HCT116 (cell line): ENCODE measurements at regions of chr1 and their contacts with region 1.

Region 1: DNA sequence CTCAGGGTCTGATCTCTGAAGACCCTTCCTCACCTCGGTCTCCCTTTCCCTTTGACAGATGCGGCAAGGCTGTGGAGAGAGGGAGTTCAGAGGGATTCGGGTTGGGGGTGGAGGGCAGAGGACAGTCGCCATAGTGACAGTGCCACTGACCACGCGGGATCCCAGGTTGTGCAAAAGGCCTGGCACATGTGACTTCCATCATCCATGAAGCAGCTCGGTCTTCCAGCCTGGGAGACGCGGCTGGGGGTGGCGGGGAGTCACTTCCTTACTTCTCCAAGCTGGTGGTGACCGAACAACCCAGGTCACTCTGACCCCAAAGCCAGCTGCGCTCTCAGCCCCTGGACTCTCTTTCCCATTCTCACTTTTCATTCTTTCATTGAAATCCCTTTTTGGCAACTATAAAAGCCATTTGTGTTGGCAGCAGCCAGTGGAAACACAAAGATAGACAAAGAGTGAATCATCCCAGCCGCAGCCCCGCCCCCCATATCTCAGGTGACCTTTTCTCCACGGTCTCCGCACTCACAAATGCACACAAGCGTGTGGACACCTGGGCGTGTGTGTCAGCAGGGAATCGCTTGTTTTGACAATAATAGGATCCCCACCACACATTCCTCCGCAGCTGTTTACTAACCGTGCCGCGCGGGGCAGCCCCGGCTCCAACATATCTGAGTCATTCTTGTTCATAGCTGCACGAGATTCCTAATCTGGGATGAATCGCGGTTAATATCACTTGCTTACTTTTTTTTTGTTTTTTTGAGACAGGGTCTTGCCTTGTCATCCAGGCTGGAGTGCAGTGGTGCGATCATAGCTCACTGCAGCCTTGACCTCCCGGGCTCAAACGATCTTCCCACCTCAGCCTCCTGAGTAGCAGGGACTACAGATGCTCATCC is 68.3 kb downstream of the DHRS3 start:
- DNase-seq: peak; percentile 83
- ATAC-seq: peak; percentile 79
- H3K4me3 ChIP-seq: peak overlapping the region; percentile 22 to 35
- H3K27ac ChIP-seq: peak overlapping the region; percentile 61
- H3K4me1 ChIP-seq: peaks cover 23 to 69% of the 10 kb centered on the region in 2 experiments
- H3K27me3 ChIP-seq: no peaks in the 10 kb centered on the region
- CTCF ChIP-seq: no peak
- POLR2A ChIP-seq: no peak
- RAD21 ChIP-seq: no peak

Region 2: GRCh38 chr1:12407050-12407961 is 142.4 kb before region 1 on chr1:
- CTCF ChIA-PET with region 1: no interaction called
- POLR2A ChIA-PET with region 1: no interaction called
- RAD21 ChIA-PET with region 1: no interaction called
- intact Hi-C with region 1: loop called (anchors 10 kb)
- DNase-seq: peak; percentile 12
- ATAC-seq: peak; percentile 65
- H3K4me3 ChIP-seq: no peak overlapping the region
- H3K27ac ChIP-seq: no peak overlapping the region
- H3K4me1 ChIP-seq: peaks cover 0 to 15% of the 10 kb centered on the region in 2 experiments; a peak in 1 of 4 replicates
- H3K27me3 ChIP-seq: no peaks in the 10 kb centered on the region
- CTCF ChIP-seq: peak; percentile 31 to 50 (median 42); a peak in 4 of 6 replicates
- POLR2A ChIP-seq: no peak
- RAD21 ChIP-seq: peak; percentile 83